Activated CD4-positive, alpha-beta memory T cell treated with anti-CD3 and anti-CD28 coated beads for 36 hours (primary cell): ENCODE measurements at regions of chr14 and their contacts with region 1.

Region 1: GRCh38 chr14:30333934-30334333 is 225.0 kb upstream of the G2E3 start:
- DNase-seq: no peak
- H3K4me3 Mint-ChIP-seq: no peak overlapping the region
- H3K27ac Mint-ChIP-seq: no peak overlapping the region
- H3K4me1 Mint-ChIP-seq: peaks cover 13% of the 10 kb centered on the region
- H3K27me3 Mint-ChIP-seq: peaks cover 14% of the 10 kb centered on the region

Region 2: GRCh38 chr14:30355431-30355913 is 21.5 kb after region 1 on chr14:
- CTCF ChIA-PET with region 1: interaction called, 3 read pairs
- POLR2A ChIA-PET with region 1: no interaction called
- intact Hi-C with region 1: loop called (anchors 1 kb)
- DNase-seq: peak; percentile 37
- H3K4me3 Mint-ChIP-seq: no peak overlapping the region
- H3K27ac Mint-ChIP-seq: peak overlapping the region; percentile 16
- H3K4me1 Mint-ChIP-seq: peaks cover 19% of the 10 kb centered on the region
- H3K27me3 Mint-ChIP-seq: peaks cover 11% of the 10 kb centered on the region